ENCODE measurements at regions of chr11 and their contacts with region 1.

Region 1: DNA sequence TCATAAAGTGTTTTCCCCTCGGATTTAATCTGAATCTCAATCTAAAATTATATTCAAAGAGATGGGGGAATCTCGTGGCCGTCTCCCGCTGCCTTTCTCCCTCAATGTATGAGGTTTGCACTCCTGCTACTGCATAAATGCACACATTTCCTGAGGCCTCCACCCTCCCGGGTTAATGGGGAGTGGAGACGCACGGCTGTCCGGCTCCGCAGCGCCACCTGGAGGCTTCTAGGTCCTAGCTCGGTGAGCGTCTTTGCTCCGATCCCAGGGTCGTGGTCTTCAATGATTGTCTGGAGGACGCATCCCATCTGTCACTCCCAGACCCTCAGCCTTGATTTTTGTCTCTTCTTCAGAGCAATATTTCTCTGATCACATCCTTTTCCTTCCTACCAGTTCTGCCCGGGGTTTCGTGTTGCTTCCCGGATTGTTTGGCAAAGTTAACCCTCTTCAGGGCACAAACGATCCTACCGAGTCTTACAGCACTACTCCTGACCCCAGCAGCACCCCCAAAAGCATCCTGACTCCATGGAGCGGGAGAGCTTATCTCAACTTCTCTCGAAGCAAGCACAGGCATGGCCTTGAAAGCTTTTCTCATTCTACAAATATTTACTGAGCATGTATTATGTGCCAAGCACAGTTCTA is at the start of gene LMO1:
- DNase-seq: peak; percentile 79 to 84 (median 80)
- H3K4me3 ChIP-seq: peak within 1 kb of the TSS; percentile 32 to 76 (median 65)
- H3K27ac ChIP-seq: no peak within 1 kb of the TSS
- H3K4me1 ChIP-seq: peaks cover 4 to 49% (median 43%) of the 10 kb centered on the region in 4 experiments
- H3K27me3 ChIP-seq: peaks cover 0 to 69% (median 40%) of the 10 kb centered on the region in 5 experiments

Region 2: GRCh38 chr11:8192016-8192895 is 71.6 kb before region 1 on chr11:
- CTCF ChIA-PET with region 1: interaction called, 43 read pairs
- POLR2A ChIA-PET with region 1: no interaction called
- DNase-seq: peak; percentile 62 to 76 (median 63)
- H3K4me3 ChIP-seq: no peak overlapping the region
- H3K27ac ChIP-seq: no peak overlapping the region
- H3K4me1 ChIP-seq: peaks cover 0 to 10% (median 6%) of the 10 kb centered on the region in 4 experiments
- H3K27me3 ChIP-seq: no peaks in the 10 kb centered on the region

Region 3: GRCh38 chr11:8219257-8220021 is 44.5 kb before region 1 on chr11:
- CTCF ChIA-PET with region 1: interaction called, 22 read pairs
- POLR2A ChIA-PET with region 1: no interaction called
- DNase-seq: peak in 2 of 3 donors; percentile 50 to 60
- H3K4me3 ChIP-seq: no peak overlapping the region
- H3K27ac ChIP-seq: no peak overlapping the region
- H3K4me1 ChIP-seq: peaks cover 0 to 21% (median 14%) of the 10 kb centered on the region in 4 experiments
- H3K27me3 ChIP-seq: peaks cover 0 to 20% (median 2%) of the 10 kb centered on the region in 5 experiments

Region 4: DNA sequence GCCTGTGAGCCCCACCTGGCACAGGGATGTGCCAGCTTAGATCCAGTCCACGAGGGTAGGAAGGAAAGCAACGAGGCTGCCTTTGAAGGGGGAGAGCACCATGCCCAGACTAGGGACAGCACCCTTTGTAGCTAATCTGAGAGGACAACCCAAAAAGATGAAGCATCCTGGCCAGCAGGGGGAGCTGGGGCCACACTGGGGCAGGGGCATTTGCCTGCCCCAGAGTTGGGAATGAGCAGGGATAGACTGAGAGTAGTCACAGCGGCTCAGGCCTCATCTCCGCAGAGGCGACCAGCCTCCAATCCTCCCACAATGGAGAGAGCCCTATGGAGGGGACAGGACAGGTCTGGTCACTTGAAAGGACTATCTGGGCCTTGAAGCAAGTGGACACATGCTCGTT is 16.6 kb before region 1 on chr11:
- CTCF ChIA-PET with region 1: interaction called, 99 read pairs
- POLR2A ChIA-PET with region 1: interaction called, 3 read pairs
- DNase-seq: peak; percentile 25 to 47 (median 28)
- H3K4me3 ChIP-seq: no peak overlapping the region
- H3K27ac ChIP-seq: no peak overlapping the region
- H3K4me1 ChIP-seq: peaks cover 0 to 3% (median 0%) of the 10 kb centered on the region in 4 experiments
- H3K27me3 ChIP-seq: peaks cover 0 to 2% (median 0%) of the 10 kb centered on the region in 5 experiments

Region 5: DNA sequence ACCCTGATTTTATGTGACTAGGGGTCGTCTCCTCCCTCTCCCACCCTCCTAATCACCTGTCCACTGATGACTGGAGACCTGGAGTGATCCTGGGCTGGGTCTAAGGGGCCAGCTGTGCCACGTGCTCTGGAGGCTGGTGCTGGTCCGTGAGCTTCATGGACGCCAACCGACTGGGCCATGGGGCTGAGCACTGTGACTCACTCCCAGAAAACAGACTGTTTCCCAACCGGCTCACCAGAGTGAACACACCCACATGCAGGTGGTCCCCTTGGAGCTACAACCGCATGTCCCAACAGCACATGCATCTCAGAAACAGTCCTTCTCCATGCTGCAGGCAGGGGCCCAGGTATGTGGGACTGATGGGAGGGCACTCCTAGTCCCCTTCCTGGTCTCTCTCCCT is 13.8 kb after region 1 on chr11:
- CTCF ChIA-PET with region 1: interaction called, 30 read pairs
- POLR2A ChIA-PET with region 1: no interaction called
- DNase-seq: no peak
- H3K4me3 ChIP-seq: no peak overlapping the region
- H3K27ac ChIP-seq: no peak overlapping the region
- H3K4me1 ChIP-seq: no peaks in the 10 kb centered on the region
- H3K27me3 ChIP-seq: peaks cover 0 to 2% (median 0%) of the 10 kb centered on the region in 5 experiments

Region 6: GRCh38 chr11:9015677-9016076 is 751.8 kb after region 1 on chr11:
- CTCF ChIA-PET with region 1: no interaction called
- POLR2A ChIA-PET with region 1: no interaction called
- DNase-seq: peak; percentile 69 to 84 (median 80)
- H3K4me3 ChIP-seq: no peak overlapping the region
- H3K27ac ChIP-seq: no peak overlapping the region
- H3K4me1 ChIP-seq: peaks cover 0 to 18% (median 13%) of the 10 kb centered on the region in 4 experiments
- H3K27me3 ChIP-seq: no peaks in the 10 kb centered on the region